ENCODE measurements at regions of chr10 and their contacts with region 1.

Region 1: DNA sequence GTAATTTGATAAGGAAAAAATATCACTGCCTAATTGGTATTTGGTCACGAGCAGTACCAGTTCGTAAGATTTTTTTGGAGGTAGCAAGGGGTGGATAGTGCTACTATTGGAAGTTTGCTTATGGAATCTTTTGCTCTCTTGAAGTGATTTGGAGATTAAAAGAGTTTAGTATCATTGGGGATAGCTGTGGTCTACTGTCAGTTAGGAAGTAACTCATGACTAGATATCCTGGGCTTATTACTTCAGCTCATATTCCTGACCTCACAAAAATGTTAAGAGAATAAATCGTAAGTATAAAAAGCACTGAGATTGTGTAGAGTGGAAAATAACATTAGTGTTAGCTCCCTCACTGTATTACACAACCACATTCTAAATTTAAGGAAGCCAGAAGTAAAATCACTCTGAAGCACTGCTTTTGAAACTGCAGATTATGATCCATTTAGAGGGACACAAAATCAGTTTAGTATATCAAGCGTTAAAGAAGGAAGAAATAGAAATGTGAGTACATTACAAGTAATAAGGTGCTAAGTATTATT is 22.6 kb downstream of the SGPL1 start:
- DNase-seq: no peak
- H3K4me3 ChIP-seq: no peak overlapping the region
- H3K27me3 ChIP-seq: no peaks in the 10 kb centered on the region
- CTCF ChIP-seq: no peak

Region 2: GRCh38 chr10:70866996-70867395 is 28.7 kb after region 1 on chr10:
- CTCF ChIA-PET with region 1: no interaction called
- POLR2A ChIA-PET with region 1: interaction called, 10 read pairs
- DNase-seq: no peak
- H3K4me3 ChIP-seq: no peak overlapping the region
- H3K27me3 ChIP-seq: no peaks in the 10 kb centered on the region
- CTCF ChIP-seq: no peak

Region 3: GRCh38 chr10:71075086-71075758 is 236.9 kb after region 1 on chr10:
- CTCF ChIA-PET with region 1: no interaction called
- POLR2A ChIA-PET with region 1: no interaction called
- DNase-seq: no peak
- H3K4me3 ChIP-seq: no peak overlapping the region
- H3K27me3 ChIP-seq: peaks cover 13% of the 10 kb centered on the region
- CTCF ChIP-seq: no peak